ENCODE measurements at regions of chr22 and their contacts with region 1.

Region 1: GRCh38 chr22:20156611-20157429 is 6.0 kb upstream of the CCDC188 start:
- DNase-seq: peak; percentile 96 to 100 (median 99)
- ATAC-seq: peak; percentile 89
- H3K4me3 ChIP-seq: no peak overlapping the region
- H3K27ac ChIP-seq: no peak overlapping the region
- H3K4me1 ChIP-seq: peaks cover 0 to 68% of the 10 kb centered on the region in 2 experiments; a peak in 2 of 5 replicates
- H3K27me3 ChIP-seq: peaks cover 33 to 74% of the 10 kb centered on the region in 2 experiments; a peak in 4 of 5 replicates
- CTCF ChIP-seq: peak; percentile 99 to 100 (median 100)
- EP300 ChIP-seq: peak; percentile 25; the same call in 1 of the 2 replicates
- POLR2A ChIP-seq: no peak
- RAD21 ChIP-seq: peak; percentile 100

Region 2: GRCh38 chr22:20175597-20175900 is 18.7 kb after region 1 on chr22:
- CTCF ChIA-PET with region 1: no interaction called
- POLR2A ChIA-PET with region 1: no interaction called
- in situ Hi-C with region 1: no loop called
- intact Hi-C with region 1: no loop called
- DNase-seq: no peak
- ATAC-seq: no peak
- H3K4me3 ChIP-seq: no peak overlapping the region
- H3K27ac ChIP-seq: no peak overlapping the region
- H3K4me1 ChIP-seq: peaks cover 0 to 58% of the 10 kb centered on the region in 2 experiments; a peak in 1 of 5 replicates
- H3K27me3 ChIP-seq: peaks cover 83 to 98% of the 10 kb centered on the region in 2 experiments; a peak in 4 of 5 replicates
- CTCF ChIP-seq: no peak
- EP300 ChIP-seq: no peak
- POLR2A ChIP-seq: no peak
- RAD21 ChIP-seq: no peak

Region 3: GRCh38 chr22:20238536-20238900 is 81.7 kb after region 1 on chr22:
- CTCF ChIA-PET with region 1: interaction called, 17 read pairs
- POLR2A ChIA-PET with region 1: interaction called, 5 read pairs
- in situ Hi-C with region 1: no loop called
- intact Hi-C with region 1: loop called (anchors 1 kb)
- DNase-seq: peak; percentile 89 to 99 (median 98)
- ATAC-seq: peak; percentile 91
- H3K4me3 ChIP-seq: no peak overlapping the region
- H3K27ac ChIP-seq: no peak overlapping the region
- H3K4me1 ChIP-seq: peaks cover 7 to 86% of the 10 kb centered on the region in 2 experiments; a peak in 3 of 5 replicates
- H3K27me3 ChIP-seq: peaks cover 43 to 98% of the 10 kb centered on the region in 2 experiments
- CTCF ChIP-seq: peak; percentile 98 to 99 (median 99)
- EP300 ChIP-seq: no peak
- POLR2A ChIP-seq: no peak
- RAD21 ChIP-seq: peak in 1 of 2 experiments; percentile 97; a peak in 2 of 4 replicates

Region 4: GRCh38 chr22:20283674-20284066 is 126.8 kb after region 1 on chr22:
- CTCF ChIA-PET with region 1: interaction called, 126 read pairs
- POLR2A ChIA-PET with region 1: interaction called, 8 read pairs
- in situ Hi-C with region 1: no loop called
- intact Hi-C with region 1: loop called (anchors 1 kb)
- DNase-seq: peak in 1 of 4 experiments; percentile 27
- ATAC-seq: no peak
- H3K4me3 ChIP-seq: no peak overlapping the region
- H3K27ac ChIP-seq: no peak overlapping the region
- H3K4me1 ChIP-seq: peaks cover 0 to 25% of the 10 kb centered on the region in 2 experiments; a peak in 3 of 5 replicates
- H3K27me3 ChIP-seq: peaks cover 20 to 68% of the 10 kb centered on the region in 2 experiments; a peak in 4 of 5 replicates
- CTCF ChIP-seq: no peak
- EP300 ChIP-seq: no peak
- POLR2A ChIP-seq: no peak
- RAD21 ChIP-seq: no peak

Region 5: DNA sequence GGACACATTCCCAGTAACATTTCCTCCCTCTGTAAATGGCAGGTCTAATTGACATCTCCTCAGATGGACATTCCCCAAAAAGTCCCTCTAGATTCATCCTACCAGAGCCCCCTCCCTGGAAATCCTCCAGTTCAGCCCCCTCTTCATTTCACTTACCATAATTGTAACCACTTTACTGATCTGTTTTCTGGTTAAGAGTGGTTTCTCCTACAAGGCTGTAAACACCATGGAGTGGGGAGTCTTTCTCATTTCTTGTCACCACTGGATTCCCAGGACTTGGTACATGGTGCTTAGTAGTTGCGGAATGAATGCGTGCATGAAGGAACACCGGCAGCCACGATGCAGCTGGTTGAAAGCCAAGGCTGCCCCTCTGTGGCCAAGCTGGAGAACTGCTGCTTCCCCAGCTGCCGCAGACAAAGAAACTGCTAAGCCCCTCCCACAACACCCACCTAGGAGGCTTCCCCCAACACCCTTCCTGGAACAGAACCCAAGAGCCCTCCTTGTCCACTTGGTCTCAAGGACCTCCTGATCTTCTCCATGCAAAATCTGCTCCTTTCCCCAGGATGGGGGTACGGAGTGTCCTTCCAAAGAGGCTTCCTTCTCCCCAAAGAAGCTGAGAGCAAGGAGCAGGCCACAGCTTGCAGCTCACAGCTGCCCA is 299.4 kb after region 1 on chr22:
- CTCF ChIA-PET with region 1: interaction called, 22 read pairs
- POLR2A ChIA-PET with region 1: interaction called, 3 read pairs
- in situ Hi-C with region 1: loop called (anchors 5 kb)
- intact Hi-C with region 1: loop called (anchors 1 kb)
- DNase-seq: peak; percentile 98 to 100 (median 99)
- ATAC-seq: peak; percentile 97
- H3K4me3 ChIP-seq: no peak overlapping the region
- H3K27ac ChIP-seq: no peak overlapping the region
- H3K4me1 ChIP-seq: no peaks in the 10 kb centered on the region; a peak in 1 of 5 replicates
- H3K27me3 ChIP-seq: peaks cover 6 to 7% of the 10 kb centered on the region in 2 experiments; a peak in 4 of 5 replicates
- CTCF ChIP-seq: peak; percentile 99 to 100 (median 100)
- EP300 ChIP-seq: peak; percentile 48; the same call in 1 of the 2 replicates
- POLR2A ChIP-seq: no peak
- RAD21 ChIP-seq: peak; percentile 100

Region 6: DNA sequence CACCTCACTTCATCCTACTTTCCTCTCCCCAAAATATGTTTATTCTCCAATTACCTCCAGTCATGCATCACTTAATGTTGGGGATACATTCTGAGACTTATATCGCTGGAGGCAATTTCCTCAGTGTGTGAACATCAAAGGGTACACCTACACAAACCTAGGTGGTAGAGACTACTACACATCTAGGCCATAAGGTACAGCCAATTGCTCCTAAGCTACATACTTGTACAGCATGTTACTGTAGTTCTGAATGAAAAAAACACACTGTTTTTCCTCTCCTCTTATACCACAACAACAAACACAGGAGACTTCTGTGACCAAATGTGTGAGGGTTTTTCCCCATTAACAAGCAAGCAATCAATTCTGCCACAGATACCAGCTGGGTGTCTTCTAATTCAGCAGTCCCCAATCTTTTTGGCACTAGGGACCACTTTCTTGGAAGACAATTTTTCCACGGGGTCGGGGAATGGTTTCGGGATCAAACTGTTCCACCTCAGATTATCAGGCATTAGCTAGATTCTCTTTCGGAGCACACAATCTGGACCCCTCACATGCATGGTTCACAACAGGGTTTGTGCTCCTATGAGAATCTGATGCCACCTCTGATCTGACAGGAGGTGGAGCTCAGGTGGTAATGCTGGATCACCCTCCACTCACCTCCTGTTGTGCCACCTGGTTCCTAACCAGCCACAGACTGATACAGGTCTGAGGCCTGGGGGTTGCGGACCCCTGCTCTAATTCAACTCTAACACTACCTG is 333.5 kb after region 1 on chr22:
- CTCF ChIA-PET with region 1: no interaction called
- POLR2A ChIA-PET with region 1: no interaction called
- in situ Hi-C with region 1: no loop called
- intact Hi-C with region 1: no loop called
- DNase-seq: no peak
- ATAC-seq: no peak
- H3K4me3 ChIP-seq: no peak overlapping the region
- H3K27ac ChIP-seq: no peak overlapping the region
- H3K4me1 ChIP-seq: peaks cover 11 to 26% of the 10 kb centered on the region in 2 experiments
- H3K27me3 ChIP-seq: no peaks in the 10 kb centered on the region
- CTCF ChIP-seq: no peak
- EP300 ChIP-seq: no peak
- POLR2A ChIP-seq: no peak
- RAD21 ChIP-seq: no peak